Left ventricle myocardium inferior (tissue), 1 donor: ENCODE measurements at regions of chr7 and their contacts with region 1.

Region 1: DNA sequence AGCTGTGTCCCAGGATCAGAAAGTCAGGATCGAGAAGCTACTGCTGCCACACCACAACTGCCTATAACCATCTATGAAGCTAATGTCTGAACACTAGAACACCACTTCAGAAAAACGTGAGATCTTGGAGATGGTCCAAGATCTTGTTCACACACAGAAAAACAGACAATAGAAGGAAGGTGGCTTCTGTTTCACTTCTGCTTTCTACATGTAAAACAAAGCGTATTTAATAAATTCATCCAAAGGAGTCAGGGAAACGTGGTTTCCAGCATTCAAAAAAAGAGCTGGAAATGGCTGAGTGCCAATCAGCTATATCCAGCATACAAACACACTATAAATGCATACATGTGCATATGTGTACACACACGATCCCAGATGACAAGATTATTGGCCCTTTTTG is 70.2 kb upstream of the CCDC71L start:
- DNase-seq: no peak
- H3K4me3 ChIP-seq: no peak overlapping the region
- H3K27ac ChIP-seq: peak overlapping the region; percentile 9
- H3K4me1 ChIP-seq: peaks cover 13% of the 10 kb centered on the region
- H3K27me3 ChIP-seq: no peaks in the 10 kb centered on the region
- CTCF ChIP-seq: no peak

Region 2: GRCh38 chr7:106552645-106553445 is 178.3 kb before region 1 on chr7:
- intact Hi-C with region 1: loop called (anchors 5 kb)
- DNase-seq: no peak
- H3K4me3 ChIP-seq: no peak overlapping the region
- H3K27ac ChIP-seq: no peak overlapping the region
- H3K4me1 ChIP-seq: no peaks in the 10 kb centered on the region
- H3K27me3 ChIP-seq: no peaks in the 10 kb centered on the region
- CTCF ChIP-seq: no peak

Region 3: GRCh38 chr7:107090457-107090856 is 359.3 kb after region 1 on chr7:
- intact Hi-C with region 1: no loop called
- DNase-seq: no peak
- H3K4me3 ChIP-seq: no peak overlapping the region
- H3K27ac ChIP-seq: no peak overlapping the region
- H3K4me1 ChIP-seq: peaks cover 17% of the 10 kb centered on the region
- H3K27me3 ChIP-seq: no peaks in the 10 kb centered on the region
- CTCF ChIP-seq: no peak